ENCODE measurements at regions of chr19 and their contacts with region 1.

Region 1: GRCh38 chr19:6108721-6109633 is 1.3 kb downstream of the RFX2 start:
- DNase-seq: peak; percentile 70
- ATAC-seq: peak in 1 of 2 donors; percentile 25

Region 2: DNA sequence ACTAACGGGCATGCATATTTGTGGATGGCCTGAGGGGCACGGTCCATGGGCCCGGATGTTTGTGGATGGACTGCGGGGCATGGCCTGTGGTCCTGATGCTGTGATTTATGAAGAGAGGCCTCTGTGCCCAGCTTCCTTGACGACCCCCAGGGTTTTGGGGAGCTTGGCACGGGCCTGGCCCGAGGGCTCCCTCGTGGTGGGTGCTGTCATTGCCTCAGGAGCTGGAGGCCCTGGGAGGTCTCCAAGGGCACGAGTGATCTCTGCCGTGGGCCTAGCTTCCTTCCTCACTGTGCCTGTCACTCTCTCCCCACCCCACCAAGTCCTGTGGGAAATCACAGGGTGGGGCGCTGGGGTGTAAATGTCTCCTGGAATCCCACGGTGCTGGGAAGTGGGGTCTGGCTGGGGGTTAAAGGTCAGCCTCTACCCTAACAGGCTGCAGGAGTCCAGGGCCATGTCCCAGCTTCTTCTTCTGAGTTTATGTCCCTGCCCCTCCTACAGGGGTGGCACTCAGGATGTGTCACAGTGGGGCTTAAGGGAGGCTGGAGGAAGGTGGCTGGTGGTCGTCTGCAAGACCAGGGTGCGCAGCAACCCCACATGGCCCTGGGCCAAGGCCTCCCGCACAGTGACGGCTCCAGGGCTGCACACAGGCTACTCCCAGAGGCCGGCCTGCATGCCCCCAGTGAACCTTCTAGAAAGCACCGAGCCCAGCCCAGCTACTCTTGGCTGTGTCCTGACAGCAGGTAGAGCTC is 103.5 kb before region 1 on chr19:
- intact Hi-C with region 1: no loop called
- DNase-seq: no peak
- ATAC-seq: no peak

Region 3: DNA sequence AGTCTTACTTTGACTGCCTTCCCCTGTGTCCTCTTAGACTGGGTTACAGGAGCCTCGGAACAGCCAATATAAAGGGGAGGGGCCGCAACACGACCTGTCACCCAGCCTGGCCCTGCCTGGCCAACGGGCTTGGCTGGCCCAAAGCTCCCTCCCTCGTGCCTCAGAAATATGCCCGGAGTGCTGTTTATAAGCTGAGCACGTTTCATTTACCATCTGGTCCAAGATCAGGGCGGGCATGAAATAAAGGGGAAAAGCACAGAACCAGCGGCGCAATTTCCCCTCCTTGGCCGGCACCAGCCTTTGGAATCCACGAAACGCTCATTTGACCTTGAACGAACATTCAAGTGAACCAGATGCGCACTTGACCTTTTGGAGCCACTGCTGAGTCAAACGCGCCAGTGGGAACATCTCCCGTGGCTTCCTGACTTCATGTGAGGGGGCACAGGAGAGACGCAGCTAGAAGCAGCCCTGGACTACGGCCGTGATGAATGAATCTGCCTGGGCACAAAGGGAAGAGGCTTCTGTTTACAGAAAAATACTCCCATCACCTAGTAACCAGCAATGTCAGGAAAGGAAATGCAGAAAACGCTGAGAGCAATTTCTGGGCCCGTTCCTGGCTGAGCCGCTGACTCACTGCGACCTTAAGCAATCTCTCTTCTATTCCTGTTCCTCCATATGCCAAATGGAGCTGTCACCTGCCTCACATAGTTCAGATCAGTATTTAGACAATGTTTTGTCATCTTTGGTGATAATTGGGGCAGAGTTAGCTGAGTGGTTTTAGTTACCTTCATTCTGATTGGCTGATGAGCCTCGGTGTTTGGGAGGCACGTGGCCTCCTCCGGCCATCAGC is 52.0 kb before region 1 on chr19:
- intact Hi-C with region 1: loop called (anchors 5 kb)
- DNase-seq: peak; percentile 82
- ATAC-seq: peak; percentile 75 to 85

Region 4: DNA sequence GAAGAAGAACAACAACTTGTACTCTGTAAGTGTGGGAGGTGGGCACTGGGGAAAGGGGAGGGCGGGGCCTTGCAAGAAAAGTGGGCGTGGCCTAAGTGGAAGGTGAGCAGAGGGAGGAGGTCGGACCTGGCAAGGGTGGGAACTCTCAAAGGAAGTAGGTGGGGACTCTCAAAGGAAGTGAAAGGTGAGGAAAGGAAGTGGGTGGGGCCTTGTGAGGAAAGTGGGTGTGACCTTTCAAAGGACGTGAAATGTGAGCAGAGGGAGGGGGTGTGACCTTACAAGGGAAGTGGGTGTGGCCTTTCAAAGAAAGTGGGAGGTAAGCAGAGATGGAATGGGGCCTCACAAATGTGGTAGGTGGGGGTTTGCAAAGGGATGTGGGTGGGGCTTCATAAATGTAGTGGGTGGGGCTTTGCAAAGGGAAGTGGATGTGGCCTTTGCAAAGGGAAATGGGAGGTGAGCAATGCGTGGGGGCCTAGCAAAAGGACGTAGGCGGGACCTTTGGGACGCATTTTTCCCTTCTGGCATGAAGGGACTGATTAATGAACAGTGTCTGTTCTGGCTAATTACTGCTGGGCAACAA is 52.4 kb after region 1 on chr19:
- intact Hi-C with region 1: no loop called
- DNase-seq: peak; percentile 37
- ATAC-seq: peak; percentile 41 to 66